Left cardiac atrium (tissue), 4 donors: ENCODE measurements at regions of chr10 and their contacts with region 1.

Region 1: GRCh38 chr10:12271210-12271540 is 75.2 kb downstream of the CDC123 start:
- DNase-seq: no peak
- ATAC-seq: peak in 1 of 2 donors; percentile 53

Region 2: GRCh38 chr10:12193193-12193592 is 78.0 kb before region 1 on chr10:
- intact Hi-C with region 1: no loop called
- DNase-seq: no peak
- ATAC-seq: no peak

Region 3: GRCh38 chr10:12348870-12349628 is 77.9 kb after region 1 on chr10 and contains the start of gene CAMK1D:
- intact Hi-C with region 1: loop called in 1 of 2 experiments (anchors 5 kb)
- DNase-seq: peak; percentile 84
- ATAC-seq: peak; percentile 86 to 87
- total RNA-seq, gene CAMK1D: 23.8 to 38.5 TPM